Naive thymus-derived CD4-positive, alpha-beta T cell (primary cell): ENCODE measurements at regions of chr2 and their contacts with region 1.

Region 1: DNA sequence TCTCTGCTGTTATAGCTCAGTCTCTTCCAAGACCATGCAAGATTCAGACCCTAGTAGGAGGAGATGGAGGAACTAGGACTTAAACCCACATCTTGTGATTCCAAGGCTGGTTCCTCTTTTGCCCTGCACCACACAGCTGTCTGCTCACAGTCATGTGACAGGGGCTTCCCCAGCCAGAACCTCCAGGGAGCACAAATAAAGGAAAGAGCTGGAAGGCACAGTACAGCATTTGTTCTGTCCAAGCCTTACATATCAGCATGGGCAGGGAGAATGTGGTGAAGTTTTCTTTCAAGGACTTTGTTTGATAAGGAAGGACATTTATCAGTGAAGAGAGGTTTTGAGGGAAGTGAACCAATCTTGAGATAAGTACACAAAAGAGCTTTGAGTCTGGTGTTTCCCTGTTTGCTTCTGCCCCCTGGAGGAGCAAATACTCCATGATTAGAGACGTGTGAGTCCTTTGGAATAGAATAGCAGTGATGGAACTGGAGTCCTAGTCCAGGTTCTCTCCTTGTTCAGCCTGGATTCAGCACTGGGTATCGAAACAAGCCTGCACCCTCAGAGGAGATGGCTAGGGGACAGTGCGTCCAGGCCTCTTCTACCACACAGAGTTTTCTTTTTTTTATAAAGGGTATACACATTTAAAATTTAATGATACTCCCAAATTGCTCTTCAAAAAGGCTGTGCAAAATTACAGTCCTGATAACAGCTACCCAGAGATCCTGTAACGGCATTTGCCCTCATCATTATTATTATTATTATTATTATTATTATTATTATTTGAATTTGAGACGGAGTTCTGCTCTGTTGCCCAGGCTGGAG is 24.6 kb upstream of the CASP10 start:
- DNase-seq: peak in 7 of 9 donors; percentile 62 to 78 (median 72)
- ATAC-seq: peak; percentile 92
- H3K4me3 ChIP-seq: no peak overlapping the region
- H3K4me3 Mint-ChIP-seq: peak overlapping the region in 3 of 10 donors; percentile 16 to 64 (median 33)
- H3K27ac ChIP-seq: peak overlapping the region; percentile 52
- H3K27ac Mint-ChIP-seq: peak overlapping the region; percentile 26 to 93 (median 89)
- H3K4me1 ChIP-seq: peaks cover 6 to 7% of the 10 kb centered on the region in 2 donors
- H3K4me1 Mint-ChIP-seq: peaks cover 12 to 35% (median 16%) of the 10 kb centered on the region in 7 donors
- H3K27me3 ChIP-seq: no peaks in the 10 kb centered on the region
- H3K27me3 Mint-ChIP-seq: no peaks in the 10 kb centered on the region

Region 2: DNA sequence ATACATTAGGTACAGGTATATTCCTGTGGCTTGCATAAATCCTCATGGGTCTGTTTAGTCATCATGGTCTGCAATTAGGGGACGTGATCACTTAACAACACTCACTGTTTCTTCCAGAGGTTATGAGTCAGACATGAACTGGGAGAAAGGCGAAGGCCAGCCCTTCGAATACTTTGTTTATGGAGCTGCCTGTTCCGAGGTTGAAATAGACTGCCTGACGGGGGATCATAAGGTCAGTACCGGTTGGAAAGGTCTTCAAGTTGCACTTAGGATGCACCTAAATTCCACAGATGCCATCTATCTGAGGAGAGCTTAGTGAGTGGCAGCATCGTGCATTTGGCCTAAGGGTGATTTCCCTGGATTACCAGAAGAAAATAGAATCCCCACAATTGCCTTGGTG is 495.6 kb before region 1 on chr2:
- CTCF ChIA-PET with region 1: no interaction called
- POLR2A ChIA-PET with region 1: no interaction called
- intact Hi-C with region 1: no loop called
- DNase-seq: no peak
- ATAC-seq: no peak
- H3K4me3 ChIP-seq: no peak overlapping the region
- H3K4me3 Mint-ChIP-seq: no peak overlapping the region
- H3K27ac ChIP-seq: no peak overlapping the region
- H3K27ac Mint-ChIP-seq: no peak overlapping the region
- H3K4me1 ChIP-seq: no peaks in the 10 kb centered on the region
- H3K4me1 Mint-ChIP-seq: peaks cover 0 to 6% (median 0%) of the 10 kb centered on the region in 7 donors
- H3K27me3 ChIP-seq: no peaks in the 10 kb centered on the region
- H3K27me3 Mint-ChIP-seq: peaks cover 16 to 25% (median 21%) of the 10 kb centered on the region in 5 donors

Region 3: DNA sequence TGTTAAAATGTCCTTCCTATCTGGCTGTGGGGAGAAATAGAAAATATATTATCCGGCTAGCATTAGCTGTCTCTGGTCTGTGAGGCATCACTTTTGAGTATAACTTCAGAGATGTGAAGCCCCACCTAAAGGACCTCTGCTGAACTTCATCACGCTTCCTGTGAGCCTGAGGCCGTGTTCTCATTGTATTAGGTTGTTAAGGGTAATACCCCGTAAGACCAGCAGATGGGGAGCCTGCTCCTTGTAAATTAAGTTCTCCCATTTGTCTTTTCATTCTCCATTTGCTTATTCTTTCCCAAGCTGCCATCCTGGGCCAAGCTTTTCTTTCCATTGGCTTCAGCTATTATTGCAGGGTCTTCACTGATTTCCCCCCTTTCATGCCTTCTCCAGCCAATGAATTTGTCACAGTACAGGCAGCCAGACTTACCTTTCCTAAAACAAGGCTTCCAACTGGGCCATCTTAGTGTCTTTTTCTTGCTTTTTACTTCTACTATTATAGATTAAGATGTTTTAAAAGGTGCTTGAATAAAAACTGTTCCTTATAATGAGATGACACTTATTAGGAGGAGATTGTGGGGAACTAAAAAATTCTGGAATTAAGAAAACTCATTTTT is 256.8 kb before region 1 on chr2:
- CTCF ChIA-PET with region 1: interaction called, 5 read pairs
- POLR2A ChIA-PET with region 1: interaction called, 3 read pairs
- intact Hi-C with region 1: loop called (anchors 1 kb)
- DNase-seq: peak; percentile 18 to 83 (median 76)
- ATAC-seq: peak; percentile 100
- H3K4me3 ChIP-seq: no peak overlapping the region
- H3K4me3 Mint-ChIP-seq: no peak overlapping the region
- H3K27ac ChIP-seq: no peak overlapping the region
- H3K27ac Mint-ChIP-seq: peak overlapping the region; percentile 4 to 86 (median 44)
- H3K4me1 ChIP-seq: no peaks in the 10 kb centered on the region
- H3K4me1 Mint-ChIP-seq: peaks cover 0 to 27% (median 6%) of the 10 kb centered on the region in 7 donors
- H3K27me3 ChIP-seq: no peaks in the 10 kb centered on the region
- H3K27me3 Mint-ChIP-seq: no peaks in the 10 kb centered on the region

Region 4: DNA sequence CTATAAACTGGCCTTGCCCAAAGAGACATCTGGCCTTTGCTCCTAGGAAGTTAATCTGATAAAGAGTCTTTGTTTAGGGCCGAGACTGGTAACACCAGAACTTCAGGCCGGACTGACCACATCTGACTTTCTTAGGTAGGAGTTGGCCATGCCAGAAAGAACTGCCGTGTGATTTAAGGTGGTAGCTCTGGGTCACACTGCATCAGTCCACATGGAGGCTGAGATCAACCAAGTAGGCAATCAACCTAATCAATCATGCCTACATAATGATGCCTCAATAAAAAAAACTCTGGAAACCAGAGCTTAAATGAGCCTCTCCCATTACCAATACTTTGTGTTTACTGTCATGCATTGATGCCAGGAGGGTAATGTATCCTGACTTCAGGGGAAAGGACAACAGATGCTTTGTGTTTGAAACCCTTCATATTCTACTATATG is 150.7 kb before region 1 on chr2:
- CTCF ChIA-PET with region 1: interaction called, 3 read pairs
- POLR2A ChIA-PET with region 1: no interaction called
- intact Hi-C with region 1: loop called in 1 of 2 experiments (anchors 5 kb)
- DNase-seq: no peak
- ATAC-seq: no peak
- H3K4me3 ChIP-seq: no peak overlapping the region
- H3K4me3 Mint-ChIP-seq: no peak overlapping the region
- H3K27ac ChIP-seq: no peak overlapping the region
- H3K27ac Mint-ChIP-seq: no peak overlapping the region
- H3K4me1 ChIP-seq: no peaks in the 10 kb centered on the region
- H3K4me1 Mint-ChIP-seq: no peaks in the 10 kb centered on the region
- H3K27me3 ChIP-seq: no peaks in the 10 kb centered on the region
- H3K27me3 Mint-ChIP-seq: no peaks in the 10 kb centered on the region

Region 5: DNA sequence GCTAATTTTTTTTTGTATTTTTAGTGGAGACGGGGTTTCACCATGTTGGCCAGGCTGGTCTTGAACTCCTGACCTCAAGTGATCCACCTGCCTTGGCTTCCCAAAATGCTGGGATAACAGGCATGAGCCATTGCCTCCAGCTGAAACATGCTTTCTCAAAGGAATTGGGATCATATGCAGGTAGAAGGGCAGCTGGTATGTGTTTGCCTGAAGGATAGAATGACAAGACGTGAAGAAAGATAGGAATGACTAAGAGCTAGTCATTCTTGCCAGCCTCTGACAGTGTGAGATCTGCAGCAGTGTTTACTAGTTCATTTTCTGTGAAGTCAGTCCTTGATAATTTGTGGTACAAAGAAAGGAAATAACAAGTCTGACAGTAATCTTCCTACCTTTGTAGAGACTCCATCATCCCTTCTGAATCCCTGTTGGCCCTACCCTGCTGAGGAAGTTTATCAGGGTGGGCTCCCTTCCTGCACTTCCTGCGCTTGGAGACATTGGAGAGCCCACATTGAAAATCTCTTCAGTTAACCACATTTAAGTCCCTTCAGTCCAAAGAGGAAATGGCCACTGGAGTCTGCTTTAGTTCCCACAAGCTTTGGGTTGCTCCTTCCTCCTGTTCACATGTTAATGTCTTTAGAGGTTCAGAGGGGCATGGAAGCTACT is 27.7 kb before region 1 on chr2:
- CTCF ChIA-PET with region 1: interaction called, 14 read pairs
- POLR2A ChIA-PET with region 1: interaction called, 14 read pairs
- intact Hi-C with region 1: no loop called
- DNase-seq: peak in 7 of 9 donors; percentile 37 to 59 (median 53)
- ATAC-seq: peak; percentile 71
- H3K4me3 ChIP-seq: peak overlapping the region; percentile 28
- H3K4me3 Mint-ChIP-seq: peak overlapping the region; percentile 54 to 88 (median 72)
- H3K27ac ChIP-seq: peak overlapping the region; percentile 27
- H3K27ac Mint-ChIP-seq: peak overlapping the region; percentile 89 to 98 (median 96)
- H3K4me1 ChIP-seq: peaks cover 57 to 63% of the 10 kb centered on the region in 2 donors
- H3K4me1 Mint-ChIP-seq: peaks cover 61 to 80% (median 76%) of the 10 kb centered on the region in 7 donors
- H3K27me3 ChIP-seq: no peaks in the 10 kb centered on the region
- H3K27me3 Mint-ChIP-seq: no peaks in the 10 kb centered on the region

Region 6: DNA sequence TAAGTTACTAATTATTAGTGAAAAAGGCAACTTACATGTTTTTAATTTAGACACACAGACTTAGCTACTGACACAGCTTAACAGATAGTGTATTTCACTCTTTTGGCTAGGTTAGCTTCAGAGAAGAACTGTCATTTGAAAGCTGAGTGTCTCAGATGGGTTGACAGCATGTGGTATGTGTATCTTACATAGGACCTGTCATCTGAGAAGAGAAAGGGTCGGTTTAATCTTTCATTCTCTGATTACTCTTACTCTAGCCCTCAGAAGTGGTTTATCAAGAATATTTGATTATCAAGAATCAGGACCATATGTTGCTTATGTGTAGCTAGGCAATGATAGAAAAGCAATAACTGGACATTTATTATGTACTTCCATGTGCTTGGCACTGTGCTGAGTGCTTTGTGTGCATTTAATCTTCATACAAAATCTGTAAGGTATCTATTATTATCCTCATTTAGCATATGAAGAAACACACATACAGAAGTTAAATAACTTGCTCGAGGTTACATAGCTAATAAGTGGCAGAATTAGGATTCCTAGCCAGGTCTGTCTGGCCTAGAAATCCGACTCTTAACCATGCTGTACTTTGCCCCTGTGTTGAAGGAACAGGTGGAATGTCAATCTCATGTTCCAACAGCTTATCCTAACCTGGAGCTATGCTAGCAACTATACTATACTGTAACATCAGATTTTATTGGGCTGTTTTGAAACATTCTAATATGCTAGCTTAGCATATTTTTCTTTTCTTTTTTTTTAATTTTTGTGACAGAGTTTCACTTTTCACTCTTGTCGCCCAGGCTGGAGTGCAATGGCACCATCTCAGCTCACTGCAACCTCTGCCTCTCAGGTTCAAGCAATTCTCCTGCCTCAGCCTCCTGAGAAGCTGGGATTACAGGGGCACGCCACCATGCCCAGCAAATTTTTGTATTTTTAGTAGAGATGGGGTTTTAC is 13.9 kb before region 1 on chr2:
- CTCF ChIA-PET with region 1: interaction called, 14 read pairs
- POLR2A ChIA-PET with region 1: interaction called, 5 read pairs
- intact Hi-C with region 1: no loop called
- DNase-seq: no peak
- ATAC-seq: no peak
- H3K4me3 ChIP-seq: no peak overlapping the region
- H3K4me3 Mint-ChIP-seq: no peak overlapping the region
- H3K27ac ChIP-seq: no peak overlapping the region
- H3K27ac Mint-ChIP-seq: peak overlapping the region in 4 of 9 donors; percentile 8 to 56 (median 18)
- H3K4me1 ChIP-seq: no peaks in the 10 kb centered on the region
- H3K4me1 Mint-ChIP-seq: peaks cover 0 to 24% (median 8%) of the 10 kb centered on the region in 7 donors
- H3K27me3 ChIP-seq: no peaks in the 10 kb centered on the region
- H3K27me3 Mint-ChIP-seq: no peaks in the 10 kb centered on the region

Region 7: GRCh38 chr2:201466050-201466675 is 307.8 kb after region 1 on chr2:
- CTCF ChIA-PET with region 1: no interaction called
- POLR2A ChIA-PET with region 1: no interaction called
- intact Hi-C with region 1: no loop called
- DNase-seq: no peak
- ATAC-seq: no peak
- H3K4me3 ChIP-seq: no peak overlapping the region
- H3K4me3 Mint-ChIP-seq: no peak overlapping the region
- H3K27ac ChIP-seq: no peak overlapping the region
- H3K27ac Mint-ChIP-seq: no peak overlapping the region
- H3K4me1 ChIP-seq: no peaks in the 10 kb centered on the region
- H3K4me1 Mint-ChIP-seq: peaks cover 0 to 15% (median 7%) of the 10 kb centered on the region in 7 donors
- H3K27me3 ChIP-seq: no peaks in the 10 kb centered on the region
- H3K27me3 Mint-ChIP-seq: no peaks in the 10 kb centered on the region